GM18951 (cell line): ENCODE measurements at regions of chr6 and their contacts with region 1.

Region 1: GRCh38 chr6:44100088-44100550 is 27.1 kb downstream of the MRPL14 start:
- POLR2A ChIP-seq: no peak

Region 2: GRCh38 chr6:43926634-43927524 is 173.2 kb before region 1 on chr6:
- in situ Hi-C with region 1: no loop called
- POLR2A ChIP-seq: no peak

Region 3: DNA sequence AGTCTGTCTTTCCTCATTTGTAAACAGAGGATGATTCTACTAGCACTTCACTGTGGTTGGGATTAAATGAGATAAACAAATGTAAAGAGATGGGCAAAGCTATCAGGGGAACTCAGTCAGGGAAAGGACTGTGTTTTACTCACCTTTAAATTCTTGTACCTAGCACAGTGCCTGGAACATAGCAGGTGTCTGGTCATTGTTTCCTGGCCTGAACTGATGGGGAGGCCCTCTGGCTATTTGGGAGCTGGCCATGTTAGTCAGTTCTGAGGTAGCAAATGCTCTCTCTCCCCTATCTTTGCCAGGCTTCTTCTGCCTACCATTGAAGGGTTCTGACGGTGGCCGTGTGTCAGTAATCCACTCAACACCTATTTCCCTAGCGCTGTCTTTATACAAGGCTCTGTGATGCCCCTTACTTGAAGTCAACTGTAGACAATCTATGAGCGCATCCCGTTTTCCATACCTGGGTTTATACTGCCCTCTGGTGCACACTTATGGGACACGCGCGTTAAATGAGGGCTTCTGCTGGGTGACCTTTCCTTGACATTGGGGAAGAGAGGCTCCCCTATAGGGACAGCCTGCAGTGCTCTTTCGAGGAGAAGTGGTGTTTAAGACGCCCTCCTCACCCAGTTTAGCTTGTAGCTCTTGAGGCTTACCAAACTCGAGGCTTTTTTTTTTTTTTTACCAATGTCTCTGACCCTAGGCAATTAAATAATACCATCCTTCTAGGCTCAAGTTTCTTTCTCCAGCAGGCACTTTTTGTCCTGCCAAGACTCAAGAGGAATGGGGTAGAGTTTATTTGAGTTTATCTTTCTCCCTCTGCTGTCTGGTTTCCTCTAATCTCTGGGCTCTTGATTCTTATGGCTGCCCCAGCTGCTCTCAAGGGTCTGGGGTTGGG is 238.4 kb after region 1 on chr6:
- in situ Hi-C with region 1: loop called (anchors 10 kb)
- POLR2A ChIP-seq: no peak